Mammary epithelial cell (primary cell): ENCODE measurements at regions of chr1 and their contacts with region 1.

Region 1: DNA sequence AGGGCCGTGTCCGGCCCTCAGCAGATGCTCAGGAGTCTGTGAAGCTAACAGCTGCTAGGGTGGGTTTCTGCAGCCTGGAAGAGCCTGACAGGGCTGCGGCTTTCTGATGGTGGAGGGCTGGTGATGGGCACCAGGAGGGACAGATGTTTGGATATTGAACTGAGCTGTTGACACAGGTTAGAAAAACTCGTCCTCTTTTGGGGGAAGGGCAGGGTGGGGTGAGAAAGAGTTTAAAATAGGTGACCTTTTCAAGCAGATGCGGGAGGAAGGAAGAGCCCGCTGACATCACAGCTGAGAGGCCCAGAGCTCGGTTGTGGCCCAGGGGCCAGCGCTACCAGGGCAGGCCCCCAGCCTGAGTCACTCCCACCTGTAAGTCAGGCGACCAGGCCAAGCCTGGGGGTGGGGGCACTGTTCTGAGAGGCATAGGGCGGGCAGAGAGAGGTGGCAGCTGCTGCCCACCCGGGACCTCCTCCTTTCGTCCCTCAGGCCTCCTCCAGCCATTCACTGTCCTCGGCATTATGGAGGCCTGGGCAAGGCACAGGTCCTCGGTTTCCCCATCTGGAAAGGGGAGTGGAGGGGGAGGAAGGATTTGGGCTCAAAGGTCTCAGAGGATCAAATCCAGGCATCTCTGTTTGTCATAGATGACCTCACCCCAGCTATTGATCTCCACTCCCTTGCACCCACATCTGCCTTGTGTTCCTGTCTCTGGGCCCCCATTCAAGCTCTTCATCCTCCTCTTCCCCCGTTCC is 32.3 kb upstream of the ID3 start:
- DNase-seq: no peak
- H3K4me3 ChIP-seq: no peak overlapping the region
- H3K27ac ChIP-seq: peak overlapping the region; percentile 81
- H3K4me1 ChIP-seq: peaks cover 58% of the 10 kb centered on the region
- H3K27me3 ChIP-seq: no peaks in the 10 kb centered on the region
- CTCF ChIP-seq: no peak

Region 2: GRCh38 chr1:23507507-23507906 is 84.1 kb before region 1 on chr1:
- CTCF ChIA-PET with region 1: no interaction called
- dilution Hi-C with region 1: no loop called
- in situ Hi-C with region 1: no loop called
- intact Hi-C with region 1: no loop called
- DNase-seq: no peak
- H3K4me3 ChIP-seq: no peak overlapping the region
- H3K27ac ChIP-seq: no peak overlapping the region
- H3K4me1 ChIP-seq: no peaks in the 10 kb centered on the region
- H3K27me3 ChIP-seq: no peaks in the 10 kb centered on the region
- CTCF ChIP-seq: no peak

Region 3: DNA sequence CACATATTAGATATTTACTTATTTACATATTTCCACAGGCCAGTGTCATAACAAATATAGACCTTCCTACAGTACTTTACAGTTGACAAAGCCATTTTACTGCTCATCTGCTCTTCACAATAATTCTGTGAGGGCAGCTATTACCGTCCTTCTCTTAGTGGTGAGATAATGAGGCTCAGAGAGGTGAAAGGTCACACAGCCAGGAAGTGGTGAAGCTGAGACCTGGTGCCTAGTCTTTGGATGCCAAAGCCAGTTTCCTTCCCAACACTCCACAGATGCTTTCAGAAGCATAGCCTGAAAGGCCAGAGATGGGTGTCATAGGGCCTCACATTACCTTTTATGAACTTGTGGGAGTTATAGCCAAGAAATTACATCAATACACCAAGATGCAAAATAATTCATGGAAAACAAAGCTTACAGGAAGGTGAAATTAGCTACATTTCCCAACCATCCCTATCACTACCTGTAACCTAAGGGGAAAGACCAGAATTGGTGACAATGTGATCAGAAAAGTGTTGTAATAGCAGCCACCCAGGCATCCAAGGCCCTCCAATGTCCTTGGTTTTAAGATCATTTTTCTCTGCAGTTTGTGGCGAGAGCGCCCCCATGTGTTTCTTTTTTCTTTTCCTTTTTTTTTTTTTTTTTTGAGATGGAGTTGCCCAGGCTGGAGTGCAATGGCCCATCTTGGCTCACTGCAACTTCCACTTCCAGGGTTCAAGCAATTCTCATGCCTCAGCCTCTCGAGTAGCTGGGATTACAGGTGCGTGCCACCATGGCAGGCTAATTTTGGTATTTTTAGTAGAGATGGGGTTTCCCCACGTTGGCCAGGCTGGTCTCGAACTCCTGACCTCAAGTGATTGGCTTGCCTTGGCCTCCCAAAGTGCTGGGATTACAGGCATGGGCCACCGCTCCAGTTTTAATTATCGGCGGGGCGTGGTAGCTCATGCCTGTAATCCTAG is 73.5 kb after region 1 on chr1:
- CTCF ChIA-PET with region 1: no interaction called
- dilution Hi-C with region 1: no loop called
- in situ Hi-C with region 1: no loop called
- intact Hi-C with region 1: loop called (anchors 1 kb)
- DNase-seq: peak; percentile 29
- H3K4me3 ChIP-seq: no peak overlapping the region
- H3K27ac ChIP-seq: no peak overlapping the region
- H3K4me1 ChIP-seq: peaks cover 18% of the 10 kb centered on the region
- H3K27me3 ChIP-seq: no peaks in the 10 kb centered on the region
- CTCF ChIP-seq: peak; percentile 26 to 52